ENCODE measurements at regions of chr19 and their contacts with region 1.

Region 1: DNA sequence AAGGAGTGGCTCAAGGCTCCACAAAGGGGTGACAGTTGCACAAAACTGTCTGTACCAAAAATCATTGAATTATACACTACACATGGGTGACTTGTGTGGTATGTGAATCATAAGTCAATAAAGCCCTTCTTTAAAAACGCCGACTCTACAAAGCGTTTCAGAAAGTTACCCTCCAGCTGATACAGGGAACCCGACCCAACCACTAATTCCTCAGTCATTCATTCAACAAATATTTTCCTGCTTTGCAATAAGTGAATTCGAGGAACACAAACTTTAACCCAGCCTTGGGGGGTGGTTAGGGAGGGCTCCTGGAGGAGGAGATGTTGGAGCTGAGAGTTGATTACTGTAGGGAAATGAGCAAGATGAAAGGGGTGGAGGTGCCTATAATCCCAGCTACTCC is 32.0 kb downstream of the LTBP4 start:
- DNase-seq: no peak
- H3K4me3 ChIP-seq: no peak overlapping the region
- H3K4me1 ChIP-seq: no peaks in the 10 kb centered on the region
- H3K27me3 ChIP-seq: peaks cover 5% of the 10 kb centered on the region; the same call in 1 of the 2 replicates

Region 2: DNA sequence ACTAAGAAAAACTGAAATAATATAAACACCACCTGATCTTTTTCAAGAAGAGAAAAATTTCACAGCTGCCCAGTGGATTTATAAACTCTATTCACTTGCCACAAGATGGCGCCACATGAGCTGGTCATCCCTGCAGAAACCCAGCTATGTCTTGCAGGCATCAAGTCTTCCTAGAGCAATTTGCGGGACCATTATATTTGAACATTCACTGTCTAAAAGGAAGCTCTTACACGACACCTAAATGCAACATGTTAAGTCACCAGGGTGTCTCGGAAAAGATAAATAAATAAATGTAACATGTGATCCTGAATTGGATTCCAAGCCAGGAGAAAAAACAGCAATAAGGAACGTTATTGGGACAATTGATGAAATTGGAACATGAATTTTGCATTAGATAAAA is 327.8 kb before region 1 on chr19:
- in situ Hi-C with region 1: loop called (anchors 10 kb)
- DNase-seq: peak; percentile 83 to 87
- H3K4me3 ChIP-seq: no peak overlapping the region
- H3K4me1 ChIP-seq: peaks cover 19% of the 10 kb centered on the region
- H3K27me3 ChIP-seq: no peaks in the 10 kb centered on the region

Measured in HAP-1 (cell line).